Body of pancreas (tissue), 4 donors: ENCODE measurements at regions of chr9 and their contacts with region 1.

Region 1: DNA sequence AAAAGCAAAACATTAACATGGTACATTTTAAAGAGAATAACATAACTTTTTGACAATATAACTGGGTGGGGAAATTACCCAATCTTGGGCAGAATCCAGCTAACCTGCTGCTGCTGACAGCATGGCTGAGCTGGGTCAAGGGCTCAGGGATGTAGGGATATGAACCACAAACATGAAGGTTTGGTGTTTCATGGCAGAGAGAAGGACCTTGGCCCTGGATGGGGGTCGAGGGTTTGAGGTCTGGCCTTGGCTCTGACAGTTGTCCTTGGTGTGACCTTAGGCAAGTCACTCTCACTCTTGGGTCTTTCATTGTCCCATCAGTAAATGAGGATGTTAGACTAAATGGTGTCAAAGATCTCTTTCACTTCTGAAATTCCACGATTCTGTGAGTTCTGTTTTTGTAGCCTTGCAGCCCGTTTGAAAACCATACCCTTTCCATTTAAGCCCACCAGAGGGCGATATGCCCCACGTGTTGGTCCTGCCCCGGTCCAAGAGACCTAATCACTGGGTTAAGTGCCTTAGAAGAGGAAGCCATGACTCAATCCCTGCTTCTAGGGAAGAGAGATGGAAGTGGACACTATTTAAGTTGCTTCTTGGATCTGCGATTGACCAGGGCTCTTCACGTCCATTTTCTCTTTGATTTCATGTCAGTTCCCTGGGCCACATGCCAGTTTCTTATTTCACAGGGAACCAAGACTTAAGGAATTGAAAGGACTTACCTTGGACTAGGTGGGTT is 56.8 kb upstream of the TEX48 start:
- DNase-seq: peak; percentile 71 to 83 (median 73)
- ATAC-seq: peak; percentile 83
- H3K4me3 ChIP-seq: no peak overlapping the region
- H3K27ac ChIP-seq: no peak overlapping the region
- H3K4me1 ChIP-seq: no peaks in the 10 kb centered on the region
- H3K27me3 ChIP-seq: no peaks in the 10 kb centered on the region
- CTCF ChIP-seq: peak; percentile 72 to 93 (median 87)
- POLR2A ChIP-seq: no peak

Region 2: GRCh38 chr9:114786251-114786650 is 47.5 kb after region 1 on chr9:
- intact Hi-C with region 1: no loop called
- DNase-seq: peak in 3 of 4 donors; percentile 29 to 50 (median 33)
- ATAC-seq: peak; percentile 81
- H3K4me3 ChIP-seq: no peak overlapping the region
- H3K27ac ChIP-seq: peak overlapping the region in 3 of 4 donors; percentile 32 to 40 (median 34)
- H3K4me1 ChIP-seq: no peaks in the 10 kb centered on the region
- H3K27me3 ChIP-seq: no peaks in the 10 kb centered on the region
- CTCF ChIP-seq: no peak
- POLR2A ChIP-seq: no peak

Region 3: GRCh38 chr9:114799441-114799840 is 60.7 kb after region 1 on chr9:
- intact Hi-C with region 1: no loop called
- DNase-seq: no peak
- ATAC-seq: no peak
- H3K4me3 ChIP-seq: no peak overlapping the region
- H3K27ac ChIP-seq: no peak overlapping the region
- H3K4me1 ChIP-seq: peaks cover 5% of the 10 kb centered on the region
- H3K27me3 ChIP-seq: no peaks in the 10 kb centered on the region
- CTCF ChIP-seq: no peak
- POLR2A ChIP-seq: no peak

Region 4: GRCh38 chr9:114911167-114911821 is 172.5 kb after region 1 on chr9:
- intact Hi-C with region 1: loop called (anchors 5 kb)
- DNase-seq: peak in 2 of 4 donors; percentile 20 to 30
- ATAC-seq: peak; percentile 54
- H3K4me3 ChIP-seq: no peak overlapping the region
- H3K27ac ChIP-seq: no peak overlapping the region
- H3K4me1 ChIP-seq: peaks cover 16% of the 10 kb centered on the region
- H3K27me3 ChIP-seq: no peaks in the 10 kb centered on the region
- CTCF ChIP-seq: peak; percentile 67 to 80 (median 70)
- POLR2A ChIP-seq: no peak